ENCODE measurements at regions of chr18 and their contacts with region 1.

Region 1: DNA sequence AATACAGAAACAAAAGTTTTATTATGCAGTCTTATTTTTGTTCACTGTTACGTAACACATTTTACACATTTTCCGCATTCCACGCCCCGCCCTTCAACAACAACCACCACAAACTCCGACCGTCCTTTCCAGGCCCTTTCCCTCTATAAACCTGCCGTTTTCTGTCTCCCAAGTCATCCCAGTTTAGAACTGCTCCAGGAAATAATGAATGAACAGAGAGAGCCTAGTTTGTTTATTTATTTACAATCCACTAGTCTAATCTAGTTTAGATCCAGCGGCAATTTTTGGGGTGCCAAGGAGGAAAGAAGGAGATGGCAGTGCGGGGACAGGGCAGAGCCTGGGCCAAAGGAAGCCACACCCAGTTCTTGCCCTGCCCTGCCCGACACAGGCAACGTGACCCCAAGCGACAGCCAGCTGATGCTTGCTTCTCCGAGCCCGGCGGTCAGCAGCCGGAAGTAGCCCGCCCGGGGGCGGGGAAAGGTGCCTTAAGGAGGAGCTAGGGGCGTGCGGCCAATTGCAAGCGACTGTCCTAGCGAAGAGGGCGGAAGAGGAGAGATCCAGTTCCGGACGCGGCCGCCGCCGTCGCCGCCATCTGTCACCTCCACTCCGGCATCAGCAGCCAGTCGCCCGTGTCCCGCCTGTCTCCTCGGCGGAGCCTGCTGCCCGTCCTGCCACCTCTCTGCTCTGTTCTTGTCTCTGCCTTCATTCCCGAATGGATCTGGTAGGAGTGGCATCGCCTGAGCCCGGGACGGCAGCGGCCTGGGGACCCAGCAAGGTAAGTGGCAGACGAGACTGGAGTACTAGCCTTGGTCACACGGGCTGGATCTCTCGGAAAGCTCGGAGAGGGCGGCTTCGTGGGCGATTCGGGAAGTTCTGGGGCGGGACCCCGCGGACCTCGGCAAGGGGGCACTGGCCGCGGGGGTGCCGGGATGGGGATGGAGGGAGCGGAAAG is at the start of gene RIOK3:
- DNase-seq: peak; percentile 70 to 90 (median 78)
- ATAC-seq: peak; percentile 91 to 95
- H3K4me3 Mint-ChIP-seq: peak within 1 kb of the TSS; percentile 92 to 100 (median 99)
- H3K27ac Mint-ChIP-seq: peak within 1 kb of the TSS; percentile 92 to 99 (median 96)
- H3K4me1 Mint-ChIP-seq: peaks cover 14 to 50% (median 42%) of the 10 kb centered on the region in 4 donors
- H3K27me3 Mint-ChIP-seq: no peaks in the 10 kb centered on the region
- polyA plus RNA-seq, gene RIOK3: 19.2 to 27.7 (median 25.0) TPM

Region 2: DNA sequence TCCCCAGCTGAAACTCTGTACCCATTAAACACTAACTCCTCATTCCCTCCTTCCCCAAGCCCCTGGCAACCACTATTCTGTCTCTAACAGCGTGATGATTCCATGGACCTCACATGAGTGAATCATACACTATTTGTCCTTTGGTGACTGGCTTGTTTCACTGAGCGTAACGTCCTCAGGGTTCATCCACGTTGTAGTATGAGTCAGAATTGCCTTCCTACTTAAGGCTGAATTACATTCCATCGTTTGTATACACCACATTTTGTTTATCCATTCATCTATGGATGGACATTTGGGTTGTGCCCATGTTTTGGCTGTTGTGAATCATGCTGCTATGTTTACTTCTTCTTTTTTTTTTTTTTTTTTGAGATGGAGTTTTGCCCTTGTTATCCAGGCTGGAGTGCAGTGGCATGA is 337.3 kb before region 1 on chr18:
- POLR2A ChIA-PET with region 1: no interaction called
- DNase-seq: no peak
- ATAC-seq: no peak
- H3K4me3 Mint-ChIP-seq: peak overlapping the region in 2 of 10 donors; percentile 36 to 43
- H3K27ac Mint-ChIP-seq: peak overlapping the region in 1 of 10 donors; percentile 72
- H3K4me1 Mint-ChIP-seq: peaks cover 14 to 21% (median 17%) of the 10 kb centered on the region in 4 donors
- H3K27me3 Mint-ChIP-seq: peaks cover 0 to 10% (median 0%) of the 10 kb centered on the region in 5 donors

Region 3: GRCh38 chr18:23442655-23443357 is 10.2 kb before region 1 on chr18:
- POLR2A ChIA-PET with region 1: interaction called, 11 read pairs
- DNase-seq: no peak
- ATAC-seq: no peak
- H3K4me3 Mint-ChIP-seq: no peak overlapping the region
- H3K27ac Mint-ChIP-seq: no peak overlapping the region
- H3K4me1 Mint-ChIP-seq: peaks cover 4 to 11% (median 10%) of the 10 kb centered on the region in 4 donors
- H3K27me3 Mint-ChIP-seq: peaks cover 0 to 3% (median 0%) of the 10 kb centered on the region in 5 donors

Region 4: DNA sequence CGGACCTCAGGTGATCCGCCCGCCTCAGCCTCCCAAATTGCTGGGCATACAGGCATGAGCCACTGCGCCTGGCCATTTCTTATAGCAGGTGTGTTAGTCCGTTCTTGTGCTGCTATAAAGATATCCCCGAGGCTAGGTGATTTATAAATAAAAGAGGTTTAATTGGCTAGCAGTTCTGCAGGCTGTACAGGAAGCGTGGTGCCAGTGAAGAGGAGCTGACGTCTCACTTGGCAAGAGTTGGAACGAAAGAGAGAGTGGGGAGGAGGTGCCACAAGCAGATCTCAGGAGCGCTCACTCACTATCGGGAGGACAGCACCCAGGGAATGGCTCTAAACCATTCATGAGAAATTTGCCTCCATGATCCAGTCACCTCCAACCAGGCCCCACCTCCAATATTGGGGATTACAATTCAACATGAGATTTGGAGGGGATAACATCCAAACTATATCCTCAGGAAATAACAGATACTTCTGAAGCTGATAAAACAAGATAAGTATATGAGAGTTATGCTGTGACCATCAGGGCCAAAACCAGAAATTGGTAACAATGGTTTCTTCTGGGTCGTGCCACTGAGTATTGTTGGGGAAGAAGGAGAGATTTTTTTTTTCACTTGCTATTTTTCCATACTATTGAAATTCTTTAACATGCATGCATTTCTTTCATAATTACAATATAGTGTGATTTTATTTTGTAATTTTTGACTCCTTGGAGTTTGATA is 42.9 kb after region 1 on chr18:
- POLR2A ChIA-PET with region 1: no interaction called
- DNase-seq: no peak
- ATAC-seq: no peak
- H3K4me3 Mint-ChIP-seq: peak overlapping the region in 1 of 10 donors; percentile 63
- H3K27ac Mint-ChIP-seq: peak overlapping the region in 2 of 10 donors; percentile 9 to 68
- H3K4me1 Mint-ChIP-seq: peaks cover 0 to 47% (median 5%) of the 10 kb centered on the region in 4 donors
- H3K27me3 Mint-ChIP-seq: no peaks in the 10 kb centered on the region

Measured in naive thymus-derived CD8-positive, alpha-beta T cell (primary cell).